Upper lobe of right lung (tissue), 1 donor: ENCODE measurements at regions of chr20 and their contacts with region 1.

Region 1: DNA sequence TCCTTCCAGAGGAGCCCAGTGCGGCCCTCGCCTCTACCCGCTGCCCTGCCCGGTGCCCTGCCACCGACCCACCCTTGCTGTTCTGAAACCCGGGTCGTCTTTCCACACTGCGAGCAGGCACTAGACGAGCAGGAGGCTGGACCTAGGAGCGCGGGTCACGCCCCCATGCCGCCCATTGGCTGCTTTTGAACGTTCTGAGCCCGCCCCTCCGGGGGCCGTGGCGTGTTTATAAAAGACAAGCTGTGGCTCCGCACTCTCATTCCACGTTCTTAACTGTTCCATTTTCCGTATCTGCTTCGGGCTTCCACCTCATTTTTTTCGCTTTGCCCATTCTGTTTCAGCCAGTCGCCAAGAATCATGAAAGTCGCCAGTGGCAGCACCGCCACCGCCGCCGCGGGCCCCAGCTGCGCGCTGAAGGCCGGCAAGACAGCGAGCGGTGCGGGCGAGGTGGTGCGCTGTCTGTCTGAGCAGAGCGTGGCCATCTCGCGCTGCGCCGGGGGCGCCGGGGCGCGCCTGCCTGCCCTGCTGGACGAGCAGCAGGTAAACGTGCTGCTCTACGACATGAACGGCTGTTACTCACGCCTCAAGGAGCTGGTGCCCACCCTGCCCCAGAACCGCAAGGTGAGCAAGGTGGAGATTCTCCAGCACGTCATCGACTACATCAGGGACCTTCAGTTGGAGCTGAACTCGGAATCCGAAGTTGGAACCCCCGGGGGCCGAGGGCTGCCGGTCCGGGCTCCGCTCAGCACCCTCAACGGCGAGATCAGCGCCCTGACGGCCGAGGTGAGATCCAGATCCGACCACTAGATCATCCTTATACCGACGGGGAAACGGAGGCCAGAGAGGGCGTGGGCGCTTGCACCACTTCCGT is at the start of gene ID1:
- DNase-seq: peak; percentile 97
- ATAC-seq: peak; percentile 82
- H3K4me3 ChIP-seq: peak within 1 kb of the TSS; percentile 88
- H3K27ac ChIP-seq: peak within 1 kb of the TSS; percentile 95
- H3K4me1 ChIP-seq: peaks cover 33% of the 10 kb centered on the region
- H3K27me3 ChIP-seq: no peaks in the 10 kb centered on the region
- CTCF ChIP-seq: no peak
- total RNA-seq, gene ID1: 515 TPM

Region 2: GRCh38 chr20:31406115-31406514 is 199.2 kb before region 1 on chr20 and contains the start of gene DEFB121:
- intact Hi-C with region 1: no loop called
- DNase-seq: no peak
- ATAC-seq: no peak
- H3K4me3 ChIP-seq: no peak within 1 kb of the TSS
- H3K27ac ChIP-seq: no peak within 1 kb of the TSS
- H3K4me1 ChIP-seq: no peaks in the 10 kb centered on the region
- H3K27me3 ChIP-seq: no peaks in the 10 kb centered on the region
- CTCF ChIP-seq: no peak
- total RNA-seq, gene DEFB121: not detected

Region 3: GRCh38 chr20:31560094-31560899 is 45.0 kb before region 1 on chr20:
- intact Hi-C with region 1: loop called (anchors 5 kb)
- DNase-seq: peak; percentile 87
- ATAC-seq: peak; percentile 80
- H3K4me3 ChIP-seq: no peak overlapping the region
- H3K27ac ChIP-seq: peak overlapping the region; percentile 64
- H3K4me1 ChIP-seq: peaks cover 19% of the 10 kb centered on the region
- H3K27me3 ChIP-seq: no peaks in the 10 kb centered on the region
- CTCF ChIP-seq: peak; percentile 92